Cardiac septum (tissue), 1 donor: ENCODE measurements at regions of chr3 and their contacts with region 1.

Region 1: GRCh38 chr3:177144923-177145780 is 52.1 kb downstream of the TBL1XR1 start:
- DNase-seq: no peak

Region 2: DNA sequence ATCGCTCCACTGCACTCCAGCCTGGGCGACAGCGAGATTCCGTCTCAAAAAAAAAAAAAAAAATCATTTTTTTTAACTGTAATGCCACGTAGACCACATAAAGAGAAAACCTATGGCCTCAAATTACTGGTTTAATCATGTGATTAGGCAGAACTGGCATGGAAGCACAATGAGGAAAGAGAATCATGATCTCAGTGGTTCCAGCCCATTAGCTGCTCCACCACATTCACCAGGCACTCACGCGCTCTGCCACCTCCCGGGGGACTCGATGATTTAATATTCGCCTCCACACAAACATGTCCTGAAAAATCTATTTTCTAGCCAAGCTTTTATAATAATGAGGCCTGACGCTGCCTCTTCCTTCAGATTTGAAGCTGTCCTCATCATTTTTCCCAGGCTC is 152.6 kb before region 1 on chr3:
- intact Hi-C with region 1: no loop called
- DNase-seq: no peak

Region 3: GRCh38 chr3:177179281-177180067 is 34.3 kb after region 1 on chr3:
- intact Hi-C with region 1: loop called (anchors 5 kb)
- DNase-seq: no peak

Region 4: DNA sequence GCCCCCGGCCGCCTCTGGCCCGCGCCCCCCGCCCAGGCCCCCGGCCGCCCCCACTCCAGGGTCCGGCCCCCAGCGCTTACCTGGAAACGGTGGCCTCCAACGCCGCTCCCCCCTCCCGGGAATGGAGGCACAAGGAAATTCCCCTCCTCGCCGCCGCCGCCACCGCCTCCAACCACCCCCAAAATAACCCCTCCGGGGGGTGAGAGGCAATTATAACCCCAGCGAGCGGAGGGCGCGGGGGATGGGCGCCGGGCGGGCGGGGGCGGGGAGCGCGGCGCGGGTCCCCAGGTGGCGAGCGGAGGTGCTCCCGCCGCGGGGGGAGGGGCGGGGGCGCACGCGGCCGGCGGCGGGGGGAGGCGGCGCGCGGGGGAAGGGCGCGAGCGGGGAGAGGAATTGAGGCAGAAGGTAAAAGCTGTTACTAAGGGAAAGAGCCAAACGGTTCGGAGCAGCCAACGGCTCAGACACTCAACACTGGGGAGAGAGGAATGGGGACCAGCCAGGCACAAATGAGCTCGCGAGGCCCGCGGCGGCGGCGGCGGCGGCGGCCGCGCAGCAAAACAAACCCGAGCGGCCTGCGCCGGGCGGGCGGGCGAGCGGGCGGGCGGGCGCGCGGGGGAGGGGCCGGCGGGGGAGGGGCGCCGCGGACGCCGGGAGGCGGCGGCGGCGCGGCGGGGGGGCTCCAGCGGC is 52.0 kb after region 1 on chr3 and contains the start of gene TBL1XR1:
- intact Hi-C with region 1: no loop called
- DNase-seq: peak; percentile 96
- total RNA-seq, gene TBL1XR1: 164 TPM